ENCODE measurements at regions of chr2 and their contacts with region 1.

Region 1: GRCh38 chr2:70871398-70872211 is 36.0 kb upstream of the CD207 start:
- H3K4me3 Mint-ChIP-seq: peak overlapping the region; percentile 39
- H3K27ac Mint-ChIP-seq: no peak overlapping the region
- H3K4me1 Mint-ChIP-seq: peaks cover 7% of the 10 kb centered on the region
- H3K27me3 Mint-ChIP-seq: peaks cover 58% of the 10 kb centered on the region

Region 2: GRCh38 chr2:70767079-70767698 is 104.4 kb before region 1 on chr2:
- intact Hi-C with region 1: no loop called
- H3K4me3 Mint-ChIP-seq: peak overlapping the region; percentile 79
- H3K27ac Mint-ChIP-seq: peak overlapping the region; percentile 68
- H3K4me1 Mint-ChIP-seq: peaks cover 14% of the 10 kb centered on the region
- H3K27me3 Mint-ChIP-seq: peaks cover 71% of the 10 kb centered on the region

Region 3: GRCh38 chr2:70835643-70836042 is 36.0 kb before region 1 on chr2 and contains the start of gene CD207:
- intact Hi-C with region 1: no loop called
- H3K4me3 Mint-ChIP-seq: no peak within 1 kb of the TSS
- H3K27ac Mint-ChIP-seq: peak within 1 kb of the TSS; percentile 49
- H3K4me1 Mint-ChIP-seq: peaks cover 82% of the 10 kb centered on the region
- H3K27me3 Mint-ChIP-seq: peaks cover 9% of the 10 kb centered on the region

Region 4: GRCh38 chr2:70919672-70920366 is 48.2 kb after region 1 on chr2:
- intact Hi-C with region 1: loop called (anchors 1 kb)
- H3K4me3 Mint-ChIP-seq: no peak overlapping the region
- H3K27ac Mint-ChIP-seq: no peak overlapping the region
- H3K4me1 Mint-ChIP-seq: no peaks in the 10 kb centered on the region
- H3K27me3 Mint-ChIP-seq: peaks cover 52% of the 10 kb centered on the region

Region 5: DNA sequence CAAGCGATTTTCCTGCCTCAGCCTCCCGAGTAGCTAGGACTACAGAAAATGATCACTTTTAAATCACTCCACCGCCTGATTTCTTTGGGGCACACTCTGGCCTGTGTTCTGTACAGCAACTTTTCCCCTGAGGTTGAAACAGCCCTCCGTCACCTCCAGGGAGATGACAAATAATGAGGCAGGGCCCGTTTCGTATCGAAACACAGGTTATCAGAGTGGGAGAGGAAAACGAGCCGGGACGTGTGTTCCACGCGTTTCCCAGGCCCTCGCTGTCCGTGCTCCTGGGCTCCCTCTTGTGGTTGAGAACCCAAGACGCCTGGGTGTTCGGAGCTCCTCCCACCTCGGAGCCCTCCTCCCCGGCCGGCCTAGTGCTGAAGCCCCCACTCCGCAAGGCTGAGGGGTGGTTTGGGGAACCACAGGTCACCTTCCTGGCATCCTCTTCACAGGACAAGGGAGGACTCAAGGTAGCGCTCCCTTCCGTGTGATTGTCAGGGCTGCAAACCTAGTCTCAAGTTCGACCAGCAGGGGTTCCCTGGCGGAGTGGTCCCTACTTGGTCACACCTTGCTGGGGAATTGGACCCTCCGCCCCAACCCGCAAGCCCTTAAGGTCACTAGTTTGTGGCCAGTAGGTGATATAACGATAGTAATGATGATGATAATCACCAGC is 76.9 kb after region 1 on chr2:
- intact Hi-C with region 1: loop called (anchors 2 kb)
- H3K4me3 Mint-ChIP-seq: peak overlapping the region; percentile 61
- H3K27ac Mint-ChIP-seq: no peak overlapping the region
- H3K4me1 Mint-ChIP-seq: peaks cover 16% of the 10 kb centered on the region
- H3K27me3 Mint-ChIP-seq: peaks cover 62% of the 10 kb centered on the region